ENCODE measurements at regions of chr9 and their contacts with region 1.

Region 1: GRCh38 chr9:87336914-87337333 is 160.7 kb upstream of the DAPK1 start:
- DNase-seq: peak; percentile 57
- H3K4me3 ChIP-seq: peak overlapping the region; percentile 10 to 14
- H3K27ac ChIP-seq: no peak overlapping the region
- H3K4me1 ChIP-seq: peaks cover 4% of the 10 kb centered on the region
- H3K27me3 ChIP-seq: no peaks in the 10 kb centered on the region
- CTCF ChIP-seq: peak; percentile 67 to 89 (median 86)
- POLR2A ChIP-seq: no peak

Region 2: GRCh38 chr9:87063871-87064270 is 273.1 kb before region 1 on chr9:
- intact Hi-C with region 1: no loop called
- DNase-seq: no peak
- H3K4me3 ChIP-seq: no peak overlapping the region
- H3K27ac ChIP-seq: no peak overlapping the region
- H3K4me1 ChIP-seq: peaks cover 3% of the 10 kb centered on the region
- H3K27me3 ChIP-seq: no peaks in the 10 kb centered on the region
- CTCF ChIP-seq: no peak
- POLR2A ChIP-seq: no peak

Region 3: GRCh38 chr9:87259543-87260518 is 77.1 kb before region 1 on chr9:
- intact Hi-C with region 1: no loop called
- DNase-seq: no peak
- H3K4me3 ChIP-seq: no peak overlapping the region
- H3K27ac ChIP-seq: no peak overlapping the region
- H3K4me1 ChIP-seq: peaks cover 14% of the 10 kb centered on the region
- H3K27me3 ChIP-seq: no peaks in the 10 kb centered on the region
- CTCF ChIP-seq: no peak
- POLR2A ChIP-seq: no peak

Region 4: GRCh38 chr9:87395804-87396479 is 59.0 kb after region 1 on chr9:
- intact Hi-C with region 1: no loop called
- DNase-seq: no peak
- H3K4me3 ChIP-seq: no peak overlapping the region
- H3K27ac ChIP-seq: no peak overlapping the region
- H3K4me1 ChIP-seq: no peaks in the 10 kb centered on the region
- H3K27me3 ChIP-seq: no peaks in the 10 kb centered on the region
- CTCF ChIP-seq: no peak
- POLR2A ChIP-seq: no peak

Region 5: GRCh38 chr9:87497604-87498045 is 160.7 kb after region 1 on chr9 and contains the start of gene DAPK1:
- intact Hi-C with region 1: loop called (anchors 5 kb)
- DNase-seq: peak; percentile 79
- H3K4me3 ChIP-seq: peak within 1 kb of the TSS; percentile 73 to 91
- H3K27ac ChIP-seq: peak within 1 kb of the TSS; percentile 80 to 87
- H3K4me1 ChIP-seq: peaks cover 6% of the 10 kb centered on the region
- H3K27me3 ChIP-seq: no peaks in the 10 kb centered on the region
- CTCF ChIP-seq: peak in 1 of 3 experiments; percentile 8
- POLR2A ChIP-seq: no peak
- total RNA-seq, gene DAPK1: 71.0 to 74.6 TPM

Region 6: DNA sequence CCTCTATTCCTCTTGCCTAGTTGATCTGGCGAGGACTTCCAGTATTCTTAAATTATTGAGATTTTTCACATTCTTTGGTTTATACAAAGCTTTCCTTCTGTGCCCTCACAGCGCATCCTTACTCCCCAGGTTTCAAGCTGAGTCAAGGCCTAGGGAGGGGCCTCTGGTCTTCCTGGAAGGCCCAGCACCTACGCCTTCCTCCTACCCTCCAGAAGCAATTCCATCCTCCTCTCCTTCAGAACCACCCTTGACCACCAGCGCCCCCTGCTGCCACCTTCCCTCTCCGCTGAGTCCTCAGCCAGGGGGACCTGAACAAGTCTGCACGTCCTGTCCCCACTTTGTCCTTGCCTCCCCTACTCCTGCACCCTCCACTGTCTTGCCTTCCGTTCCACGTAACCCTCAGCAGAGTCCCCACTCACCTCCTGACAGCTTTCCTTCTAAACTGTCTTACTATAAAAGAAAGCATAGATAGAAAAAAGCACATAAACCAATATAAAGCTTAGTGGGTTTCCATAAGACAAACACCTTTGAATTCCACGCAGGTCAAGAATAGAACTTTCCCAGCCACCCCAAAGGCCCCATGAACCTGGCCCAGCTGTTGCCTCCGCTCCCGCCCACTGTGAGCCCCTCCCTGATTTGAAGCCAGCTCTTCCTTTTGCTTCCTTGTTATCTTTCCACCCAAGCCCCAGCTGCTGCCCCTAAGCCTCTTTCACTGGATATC is 326.0 kb after region 1 on chr9:
- intact Hi-C with region 1: loop called (anchors 5 kb)
- DNase-seq: peak; percentile 81
- H3K4me3 ChIP-seq: no peak overlapping the region
- H3K27ac ChIP-seq: no peak overlapping the region
- H3K4me1 ChIP-seq: no peaks in the 10 kb centered on the region
- H3K27me3 ChIP-seq: no peaks in the 10 kb centered on the region
- CTCF ChIP-seq: peak; percentile 63 to 73 (median 65)
- POLR2A ChIP-seq: no peak

Region 7: GRCh38 chr9:87872079-87872624 is 535.2 kb after region 1 on chr9:
- intact Hi-C with region 1: no loop called
- DNase-seq: peak; percentile 61
- H3K4me3 ChIP-seq: no peak overlapping the region
- H3K27ac ChIP-seq: no peak overlapping the region
- H3K4me1 ChIP-seq: peaks cover 6% of the 10 kb centered on the region
- H3K27me3 ChIP-seq: no peaks in the 10 kb centered on the region
- CTCF ChIP-seq: no peak
- POLR2A ChIP-seq: no peak